A673 (cell line): ENCODE measurements at regions of chr6 and their contacts with region 1.

Region 1: DNA sequence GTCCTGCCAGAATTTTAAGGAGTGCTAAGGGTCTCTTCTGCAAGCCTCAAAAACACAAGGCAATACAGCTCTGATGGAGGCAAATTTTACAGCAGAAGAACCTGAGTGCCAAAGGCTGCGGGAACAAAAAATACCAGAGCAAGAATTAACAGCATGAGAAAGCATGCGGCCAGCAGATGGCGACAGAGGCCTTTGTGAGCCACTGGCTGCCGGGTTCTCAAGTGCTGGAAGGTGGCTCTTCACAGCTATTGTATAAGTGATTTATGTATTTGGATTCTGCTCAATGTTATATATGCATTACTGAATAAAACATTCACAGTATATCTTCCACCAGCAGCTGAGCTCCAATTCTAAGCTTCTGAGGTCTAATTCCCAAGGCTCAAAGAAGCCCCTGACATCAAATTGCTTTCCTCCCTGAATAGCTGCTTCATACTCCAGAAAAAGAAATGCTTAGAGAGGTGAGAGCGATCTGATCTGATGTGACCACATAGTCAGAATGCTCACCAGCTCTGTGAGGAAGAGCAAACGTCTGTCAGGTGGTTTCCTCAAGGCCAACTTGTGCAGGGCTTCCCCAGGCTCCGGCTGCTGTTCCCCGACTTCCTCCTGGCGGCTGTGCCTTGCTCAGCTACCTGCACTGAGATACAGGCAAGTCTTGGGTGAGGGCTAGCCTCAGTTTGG is 58.6 kb downstream of the PPP1R3G start:
- DNase-seq: peak; percentile 88
- H3K4me3 ChIP-seq: no peak overlapping the region
- H3K27ac ChIP-seq: no peak overlapping the region
- H3K4me1 ChIP-seq: peaks cover 4% of the 10 kb centered on the region
- H3K27me3 ChIP-seq: no peaks in the 10 kb centered on the region
- CTCF ChIP-seq: peak; percentile 96

Region 2: DNA sequence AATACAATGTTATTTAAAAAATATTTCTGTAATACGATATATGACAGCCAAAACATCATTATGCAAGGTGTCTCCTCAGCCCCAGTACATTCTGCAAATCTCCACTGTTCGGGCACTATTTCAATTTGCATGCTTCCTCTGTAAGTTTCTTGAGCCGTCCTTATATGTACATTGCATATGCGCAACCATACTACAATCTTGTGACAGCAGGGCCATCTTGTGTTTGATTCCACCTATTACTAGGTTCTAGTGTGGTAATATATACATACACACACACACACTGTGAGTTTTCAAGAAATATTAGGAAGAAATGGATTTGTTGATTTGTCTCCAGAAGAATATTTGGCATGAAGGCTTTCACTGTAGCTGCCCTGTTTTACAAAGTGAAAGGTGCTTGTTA is 107.1 kb after region 1 on chr6:
- CTCF ChIA-PET with region 1: no interaction called
- POLR2A ChIA-PET with region 1: no interaction called
- intact Hi-C with region 1: loop called (anchors 10 kb)
- DNase-seq: no peak
- H3K4me3 ChIP-seq: no peak overlapping the region
- H3K27ac ChIP-seq: no peak overlapping the region
- H3K4me1 ChIP-seq: peaks cover 9% of the 10 kb centered on the region
- H3K27me3 ChIP-seq: no peaks in the 10 kb centered on the region
- CTCF ChIP-seq: 0 out of 2 replicates have a peak, but pooled peaks have one; percentile 14

Region 3: DNA sequence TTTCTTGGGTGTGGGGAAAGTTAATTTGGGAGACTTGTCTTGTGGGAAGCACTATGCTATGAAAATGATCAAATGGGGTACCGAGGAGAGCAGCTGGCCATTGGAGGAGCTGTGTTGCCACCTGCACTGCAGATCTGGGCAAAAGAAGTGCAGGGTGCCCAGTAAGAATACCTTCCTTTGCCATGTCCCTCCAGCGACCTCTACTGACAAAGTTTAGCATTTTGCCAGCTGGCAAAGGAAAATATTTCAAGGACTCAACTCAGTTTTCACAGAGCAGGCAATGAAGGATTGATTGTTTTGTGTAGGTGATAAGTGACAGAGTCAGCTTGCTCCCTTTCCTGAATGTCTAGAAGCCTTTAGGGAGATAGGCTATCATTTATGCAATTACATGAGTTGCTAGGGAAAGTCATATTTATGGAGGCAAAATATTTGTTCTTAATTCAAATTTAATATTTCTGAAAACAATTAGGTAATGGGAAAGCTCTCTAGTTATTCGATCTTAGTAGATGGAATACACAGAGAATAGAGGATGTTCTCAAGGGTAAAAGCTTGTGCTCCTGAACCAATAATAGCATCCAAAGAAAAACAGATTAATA is 236.0 kb after region 1 on chr6:
- CTCF ChIA-PET with region 1: interaction called, 14 read pairs
- POLR2A ChIA-PET with region 1: no interaction called
- intact Hi-C with region 1: loop called (anchors 1 kb)
- DNase-seq: peak; percentile 76
- H3K4me3 ChIP-seq: no peak overlapping the region
- H3K27ac ChIP-seq: no peak overlapping the region
- H3K4me1 ChIP-seq: no peaks in the 10 kb centered on the region
- H3K27me3 ChIP-seq: no peaks in the 10 kb centered on the region
- CTCF ChIP-seq: peak; percentile 76

Region 4: GRCh38 chr6:5398530-5398929 is 254.8 kb after region 1 on chr6:
- CTCF ChIA-PET with region 1: interaction called, 9 read pairs
- POLR2A ChIA-PET with region 1: no interaction called
- intact Hi-C with region 1: loop called (anchors 2 kb)
- DNase-seq: peak; percentile 64
- H3K4me3 ChIP-seq: no peak overlapping the region
- H3K27ac ChIP-seq: no peak overlapping the region
- H3K4me1 ChIP-seq: no peaks in the 10 kb centered on the region
- H3K27me3 ChIP-seq: no peaks in the 10 kb centered on the region
- CTCF ChIP-seq: peak; percentile 73

Region 5: GRCh38 chr6:6547110-6547879 is 1403.5 kb after region 1 on chr6:
- CTCF ChIA-PET with region 1: no interaction called
- POLR2A ChIA-PET with region 1: no interaction called
- intact Hi-C with region 1: loop called (anchors 10 kb)
- DNase-seq: peak; percentile 87
- H3K4me3 ChIP-seq: peak overlapping the region; percentile 37
- H3K27ac ChIP-seq: no peak overlapping the region
- H3K4me1 ChIP-seq: peaks cover 6% of the 10 kb centered on the region
- H3K27me3 ChIP-seq: no peaks in the 10 kb centered on the region
- CTCF ChIP-seq: peak; percentile 91